Activated CD8-positive, alpha-beta T cell treated with anti-CD3 and anti-CD28 coated beads for 36 hours (primary cell): ENCODE measurements at regions of chr10 and their contacts with region 1.

Region 1: DNA sequence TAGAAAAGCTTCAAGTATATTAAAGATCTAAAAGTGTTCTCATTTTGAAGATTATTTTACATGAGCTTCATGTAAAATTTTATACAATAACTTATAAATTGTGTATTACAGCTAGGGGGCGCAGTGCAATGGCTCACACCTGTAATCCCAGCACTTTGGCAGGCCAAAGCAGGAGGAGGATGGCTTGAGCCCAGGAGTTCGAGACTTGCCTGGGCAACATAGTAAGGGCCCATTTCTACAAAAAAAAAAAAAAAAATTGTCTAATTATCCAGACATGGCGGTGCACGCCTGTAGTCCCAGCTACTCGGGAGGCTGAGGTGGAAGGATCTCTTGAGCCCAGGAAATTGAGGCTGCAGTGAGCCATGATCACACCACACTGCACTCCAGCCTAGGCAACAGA is 16.6 kb downstream of the ACBD5 start:
- DNase-seq: peak; percentile 64
- ATAC-seq: peak; percentile 55
- H3K4me3 Mint-ChIP-seq: no peak overlapping the region
- H3K27ac Mint-ChIP-seq: no peak overlapping the region
- H3K4me1 Mint-ChIP-seq: peaks cover 19% of the 10 kb centered on the region
- H3K27me3 Mint-ChIP-seq: no peaks in the 10 kb centered on the region
- CTCF ChIP-seq: peak; percentile 76

Region 2: DNA sequence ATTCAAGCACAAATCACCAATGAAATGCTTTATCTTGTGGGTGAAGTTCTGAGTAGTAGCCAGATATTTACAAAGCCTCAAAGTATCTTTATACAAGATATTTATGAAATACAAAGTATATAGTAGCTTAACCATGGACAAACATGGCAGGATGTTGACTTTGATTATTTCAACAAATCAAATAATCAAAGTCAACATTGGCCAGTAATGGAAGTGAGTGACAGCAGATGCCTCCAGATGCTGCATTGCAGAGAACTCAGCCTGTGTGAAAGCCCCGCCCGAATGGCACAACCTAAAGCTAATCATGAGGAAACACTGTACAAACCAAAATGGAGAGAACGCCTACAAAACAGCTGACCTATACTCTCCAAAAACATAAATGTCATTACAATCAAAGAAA is 220.5 kb before region 1 on chr10:
- CTCF ChIA-PET with region 1: no interaction called
- POLR2A ChIA-PET with region 1: no interaction called
- intact Hi-C with region 1: no loop called
- DNase-seq: no peak
- ATAC-seq: no peak
- H3K4me3 Mint-ChIP-seq: no peak overlapping the region
- H3K27ac Mint-ChIP-seq: no peak overlapping the region
- H3K4me1 Mint-ChIP-seq: no peaks in the 10 kb centered on the region
- H3K27me3 Mint-ChIP-seq: no peaks in the 10 kb centered on the region
- CTCF ChIP-seq: no peak

Region 3: GRCh38 chr10:27207350-27207749 is 16.6 kb before region 1 on chr10:
- CTCF ChIA-PET with region 1: interaction called, 19 read pairs
- POLR2A ChIA-PET with region 1: interaction called, 3 read pairs
- intact Hi-C with region 1: no loop called
- DNase-seq: no peak
- ATAC-seq: no peak
- H3K4me3 Mint-ChIP-seq: no peak overlapping the region
- H3K27ac Mint-ChIP-seq: no peak overlapping the region
- H3K4me1 Mint-ChIP-seq: no peaks in the 10 kb centered on the region
- H3K27me3 Mint-ChIP-seq: no peaks in the 10 kb centered on the region
- CTCF ChIP-seq: no peak

Region 4: GRCh38 chr10:27235706-27236105 is 11.7 kb after region 1 on chr10:
- CTCF ChIA-PET with region 1: interaction called, 41 read pairs
- POLR2A ChIA-PET with region 1: interaction called, 4 read pairs
- intact Hi-C with region 1: no loop called
- DNase-seq: no peak
- ATAC-seq: no peak
- H3K4me3 Mint-ChIP-seq: no peak overlapping the region
- H3K27ac Mint-ChIP-seq: no peak overlapping the region
- H3K4me1 Mint-ChIP-seq: peaks cover 7% of the 10 kb centered on the region
- H3K27me3 Mint-ChIP-seq: no peaks in the 10 kb centered on the region
- CTCF ChIP-seq: no peak

Region 5: DNA sequence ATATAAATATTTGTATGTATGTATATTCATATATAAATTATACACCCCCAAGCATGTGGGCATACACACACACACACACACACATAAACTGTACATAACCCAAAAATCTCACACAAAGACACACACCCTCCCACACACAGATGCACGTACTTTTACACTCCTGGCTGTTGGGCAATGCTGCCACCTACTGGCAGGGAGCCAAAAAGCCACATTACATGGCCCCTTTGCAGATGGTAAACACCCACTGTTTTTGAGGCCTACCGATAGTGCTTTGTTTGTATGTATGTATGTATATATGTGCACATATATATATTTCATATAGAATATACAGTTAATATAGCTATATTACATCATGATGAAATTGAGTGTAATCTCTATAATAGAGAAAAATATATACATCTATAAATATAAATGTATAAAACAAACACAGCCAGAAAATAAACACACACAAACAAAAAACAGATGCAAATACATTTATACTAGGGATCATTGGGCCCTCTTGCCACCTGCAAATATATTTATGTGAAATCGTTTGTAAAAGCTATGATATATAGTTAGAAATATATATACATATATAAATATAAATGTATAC is 136.7 kb after region 1 on chr10:
- CTCF ChIA-PET with region 1: interaction called, 15 read pairs
- POLR2A ChIA-PET with region 1: no interaction called
- intact Hi-C with region 1: loop called (anchors 10 kb)
- DNase-seq: peak; percentile 89
- ATAC-seq: peak; percentile 94
- H3K4me3 Mint-ChIP-seq: no peak overlapping the region
- H3K27ac Mint-ChIP-seq: no peak overlapping the region
- H3K4me1 Mint-ChIP-seq: no peaks in the 10 kb centered on the region
- H3K27me3 Mint-ChIP-seq: no peaks in the 10 kb centered on the region
- CTCF ChIP-seq: peak; percentile 95